GM12878 (cell line): ENCODE measurements at regions of chr2 and their contacts with region 1.

Region 1: DNA sequence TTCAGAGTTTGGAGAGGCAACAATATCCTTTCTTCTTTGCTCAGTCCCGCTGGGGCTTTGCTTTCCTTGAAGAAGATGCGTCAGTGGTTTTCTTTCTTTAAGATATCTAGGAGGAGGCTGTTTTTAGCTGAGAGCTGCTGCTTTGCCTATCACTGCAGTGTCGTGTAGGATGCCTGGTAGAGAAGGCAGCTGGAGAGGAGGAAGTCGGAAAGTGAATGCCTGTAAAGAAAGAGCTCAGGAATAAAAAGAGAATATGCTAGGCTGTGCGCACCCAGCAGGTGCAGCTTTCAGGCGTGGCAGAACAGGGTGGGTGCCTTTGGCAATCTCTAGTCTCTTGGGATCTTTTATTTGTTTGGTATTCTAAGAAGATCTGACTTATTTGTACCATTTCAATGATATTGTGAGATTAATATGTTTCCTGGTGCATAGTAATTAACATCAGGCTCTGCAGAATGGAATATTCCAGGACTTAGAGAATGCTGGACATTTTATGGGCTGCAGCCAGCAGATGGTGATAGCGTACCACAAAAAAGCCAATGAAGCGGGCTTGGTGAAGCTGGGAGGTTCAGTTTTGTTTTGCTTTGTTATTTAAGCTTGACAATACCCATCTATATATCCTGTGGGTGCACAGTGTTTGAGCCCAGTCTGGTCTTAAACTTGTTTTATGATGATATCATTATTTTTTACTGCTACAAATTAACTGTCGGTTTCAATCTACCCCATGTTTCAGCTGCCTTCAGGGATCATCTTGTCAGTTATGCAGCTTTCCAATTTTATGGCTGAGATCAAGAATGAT is 34.9 kb downstream of the CAVIN2 start:
- DNase-seq: no peak
- ATAC-seq: peak; percentile 91
- H3K4me3 ChIP-seq: no peak overlapping the region
- H3K27ac ChIP-seq: no peak overlapping the region
- H3K4me1 ChIP-seq: no peaks in the 10 kb centered on the region
- H3K27me3 ChIP-seq: no peaks in the 10 kb centered on the region
- CTCF ChIP-seq: peak; percentile 64 to 87 (median 73)
- EP300 ChIP-seq: no peak
- POLR2A ChIP-seq: no peak
- RAD21 ChIP-seq: peak; percentile 90

Region 2: DNA sequence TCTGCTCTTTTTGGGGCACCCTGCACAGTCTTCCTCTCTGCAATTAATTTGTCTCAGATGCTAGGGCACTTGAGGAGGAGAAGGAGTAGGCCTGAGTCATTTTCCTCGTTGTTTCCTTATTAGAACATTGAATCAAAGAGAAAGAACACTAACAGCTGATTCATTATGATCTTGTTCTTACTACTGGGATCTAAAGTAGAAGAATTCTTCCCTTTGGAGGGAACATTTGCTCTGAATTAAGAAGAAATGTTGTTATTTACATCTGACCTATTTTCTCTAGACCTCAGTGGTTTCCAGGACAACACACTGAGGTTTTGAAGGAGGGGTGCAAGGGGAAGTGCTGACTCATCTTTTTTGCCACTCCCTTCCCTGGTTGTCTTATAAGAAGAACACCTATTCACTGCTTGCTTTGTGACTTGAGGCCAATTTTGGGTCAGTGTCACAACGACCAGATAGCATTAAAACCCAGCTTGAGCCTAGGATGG is 773.7 kb before region 1 on chr2:
- CTCF ChIA-PET with region 1: no interaction called
- POLR2A ChIA-PET with region 1: no interaction called
- RAD21 ChIA-PET with region 1: no interaction called
- SMC1A ChIA-PET with region 1: no interaction called
- in situ Hi-C with region 1: no loop called
- intact Hi-C with region 1: no loop called
- DNase-seq: no peak
- ATAC-seq: peak; percentile 68
- H3K4me3 ChIP-seq: no peak overlapping the region
- H3K27ac ChIP-seq: no peak overlapping the region
- H3K4me1 ChIP-seq: no peaks in the 10 kb centered on the region; the same call in 1 of the 2 replicates
- H3K27me3 ChIP-seq: no peaks in the 10 kb centered on the region
- CTCF ChIP-seq: no peak
- EP300 ChIP-seq: no peak
- POLR2A ChIP-seq: no peak
- RAD21 ChIP-seq: no peak

Region 3: GRCh38 chr2:191566344-191566743 is 245.7 kb before region 1 on chr2:
- CTCF ChIA-PET with region 1: interaction called, 11 read pairs
- POLR2A ChIA-PET with region 1: no interaction called
- RAD21 ChIA-PET with region 1: interaction called, 4 read pairs
- SMC1A ChIA-PET with region 1: interaction called, 6 read pairs
- in situ Hi-C with region 1: no loop called
- intact Hi-C with region 1: no loop called
- DNase-seq: no peak
- ATAC-seq: peak; percentile 91
- H3K4me3 ChIP-seq: no peak overlapping the region
- H3K27ac ChIP-seq: no peak overlapping the region
- H3K4me1 ChIP-seq: peaks cover 8% of the 10 kb centered on the region
- H3K27me3 ChIP-seq: no peaks in the 10 kb centered on the region
- CTCF ChIP-seq: peak; percentile 77 to 81 (median 79)
- EP300 ChIP-seq: no peak
- POLR2A ChIP-seq: no peak
- RAD21 ChIP-seq: peak; percentile 90

Region 4: DNA sequence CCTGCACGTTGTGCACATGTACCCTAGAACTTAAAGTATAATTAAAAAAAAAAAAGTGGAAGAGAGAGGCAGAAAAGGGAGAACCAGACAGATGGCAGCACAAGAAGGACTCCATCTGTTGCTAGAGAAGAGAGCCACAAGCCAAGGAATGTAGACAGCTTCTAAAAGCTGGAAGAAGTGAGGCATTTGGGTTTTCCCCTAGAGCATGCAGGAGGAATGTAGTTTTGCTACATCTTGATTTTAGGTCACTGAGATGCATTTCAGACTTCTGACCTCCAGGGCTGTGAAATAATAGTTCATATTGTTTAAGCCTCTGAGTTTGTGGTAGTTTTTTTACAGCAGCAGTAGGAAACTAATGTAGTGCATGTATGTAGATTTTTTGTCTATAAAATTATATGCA is 11.1 kb before region 1 on chr2:
- CTCF ChIA-PET with region 1: interaction called, 15 read pairs
- POLR2A ChIA-PET with region 1: no interaction called
- RAD21 ChIA-PET with region 1: interaction called, 5 read pairs
- SMC1A ChIA-PET with region 1: interaction called, 17 read pairs
- in situ Hi-C with region 1: no loop called
- intact Hi-C with region 1: no loop called
- DNase-seq: no peak
- ATAC-seq: no peak
- H3K4me3 ChIP-seq: no peak overlapping the region
- H3K27ac ChIP-seq: no peak overlapping the region
- H3K4me1 ChIP-seq: no peaks in the 10 kb centered on the region
- H3K27me3 ChIP-seq: no peaks in the 10 kb centered on the region
- CTCF ChIP-seq: no peak
- EP300 ChIP-seq: no peak
- POLR2A ChIP-seq: no peak
- RAD21 ChIP-seq: no peak

Region 5: GRCh38 chr2:191836853-191837769 is 25.1 kb after region 1 on chr2:
- CTCF ChIA-PET with region 1: interaction called, 16 read pairs
- POLR2A ChIA-PET with region 1: no interaction called
- RAD21 ChIA-PET with region 1: interaction called, 6 read pairs
- SMC1A ChIA-PET with region 1: interaction called, 8 read pairs
- in situ Hi-C with region 1: no loop called
- intact Hi-C with region 1: loop called (anchors 2 kb)
- DNase-seq: no peak
- ATAC-seq: peak; percentile 71
- H3K4me3 ChIP-seq: no peak overlapping the region
- H3K27ac ChIP-seq: no peak overlapping the region
- H3K4me1 ChIP-seq: no peaks in the 10 kb centered on the region
- H3K27me3 ChIP-seq: peaks cover 0 to 2% of the 10 kb centered on the region in 2 experiments; a peak in 3 of 4 replicates
- CTCF ChIP-seq: no peak
- EP300 ChIP-seq: no peak
- POLR2A ChIP-seq: no peak
- RAD21 ChIP-seq: no peak

Region 6: DNA sequence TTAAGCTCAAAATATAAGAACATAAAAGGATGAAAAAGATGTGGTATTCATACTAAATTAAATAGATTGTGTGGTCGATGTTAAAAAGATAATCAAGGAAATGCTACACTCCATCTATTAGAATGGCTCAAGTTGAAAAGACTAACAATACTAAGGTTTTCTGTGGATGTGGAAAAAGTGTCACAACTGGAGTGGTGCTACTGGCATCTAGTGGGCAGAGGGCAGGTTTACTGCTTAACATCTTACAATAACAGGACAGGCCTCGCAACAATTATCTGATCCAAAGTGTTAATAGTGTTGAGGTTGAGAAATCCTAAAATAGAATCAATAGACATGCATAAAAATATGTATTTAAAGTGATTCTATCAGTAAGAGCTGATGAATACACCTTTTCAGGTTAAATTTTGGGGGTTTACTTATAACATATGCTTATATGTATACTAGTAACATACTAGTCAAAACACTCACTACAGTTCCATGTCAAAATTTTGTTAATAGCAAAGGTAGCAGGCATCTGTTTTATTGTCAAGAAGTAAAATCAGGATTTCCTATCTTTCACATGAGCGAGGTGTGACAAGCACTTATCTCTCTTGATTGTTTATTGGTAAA is 474.2 kb after region 1 on chr2:
- CTCF ChIA-PET with region 1: interaction called, 5 read pairs
- POLR2A ChIA-PET with region 1: no interaction called
- RAD21 ChIA-PET with region 1: no interaction called
- SMC1A ChIA-PET with region 1: interaction called, 4 read pairs
- in situ Hi-C with region 1: no loop called
- intact Hi-C with region 1: loop called (anchors 2 kb)
- DNase-seq: no peak
- ATAC-seq: peak; percentile 59
- H3K4me3 ChIP-seq: no peak overlapping the region
- H3K27ac ChIP-seq: no peak overlapping the region
- H3K4me1 ChIP-seq: no peaks in the 10 kb centered on the region
- H3K27me3 ChIP-seq: no peaks in the 10 kb centered on the region
- CTCF ChIP-seq: peak; percentile 32 to 38 (median 36); a peak in 4 of 6 replicates
- EP300 ChIP-seq: no peak
- POLR2A ChIP-seq: no peak
- RAD21 ChIP-seq: peak; percentile 43